Cardiac septum (tissue), 1 donor: ENCODE measurements at regions of chr2 and their contacts with region 1.

Region 1: GRCh38 chr2:128027801-128028667 is at the start of gene SAP130:
- DNase-seq: peak; percentile 99
- total RNA-seq, gene SAP130: 19.9 TPM

Region 2: DNA sequence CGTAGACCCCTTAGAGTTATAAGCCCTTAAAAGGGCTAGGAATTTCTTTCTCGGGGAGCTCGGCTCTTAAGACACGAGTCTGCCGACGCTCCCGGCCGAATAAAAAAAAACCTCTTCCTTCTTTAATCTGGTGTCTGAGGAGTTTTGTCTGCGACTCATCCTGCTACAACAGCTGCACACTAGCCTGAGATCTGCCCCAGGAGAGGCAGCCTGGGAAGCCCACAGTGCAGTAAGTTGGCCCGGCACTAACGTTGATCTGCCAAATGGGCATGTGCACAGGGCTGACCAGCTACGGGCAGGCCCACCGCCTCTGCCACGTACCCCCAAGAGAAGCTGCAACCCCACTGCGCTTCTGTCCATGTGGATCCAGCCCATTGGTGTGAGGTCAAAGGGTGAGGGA is 344.3 kb before region 1 on chr2:
- intact Hi-C with region 1: no loop called
- DNase-seq: no peak

Region 3: DNA sequence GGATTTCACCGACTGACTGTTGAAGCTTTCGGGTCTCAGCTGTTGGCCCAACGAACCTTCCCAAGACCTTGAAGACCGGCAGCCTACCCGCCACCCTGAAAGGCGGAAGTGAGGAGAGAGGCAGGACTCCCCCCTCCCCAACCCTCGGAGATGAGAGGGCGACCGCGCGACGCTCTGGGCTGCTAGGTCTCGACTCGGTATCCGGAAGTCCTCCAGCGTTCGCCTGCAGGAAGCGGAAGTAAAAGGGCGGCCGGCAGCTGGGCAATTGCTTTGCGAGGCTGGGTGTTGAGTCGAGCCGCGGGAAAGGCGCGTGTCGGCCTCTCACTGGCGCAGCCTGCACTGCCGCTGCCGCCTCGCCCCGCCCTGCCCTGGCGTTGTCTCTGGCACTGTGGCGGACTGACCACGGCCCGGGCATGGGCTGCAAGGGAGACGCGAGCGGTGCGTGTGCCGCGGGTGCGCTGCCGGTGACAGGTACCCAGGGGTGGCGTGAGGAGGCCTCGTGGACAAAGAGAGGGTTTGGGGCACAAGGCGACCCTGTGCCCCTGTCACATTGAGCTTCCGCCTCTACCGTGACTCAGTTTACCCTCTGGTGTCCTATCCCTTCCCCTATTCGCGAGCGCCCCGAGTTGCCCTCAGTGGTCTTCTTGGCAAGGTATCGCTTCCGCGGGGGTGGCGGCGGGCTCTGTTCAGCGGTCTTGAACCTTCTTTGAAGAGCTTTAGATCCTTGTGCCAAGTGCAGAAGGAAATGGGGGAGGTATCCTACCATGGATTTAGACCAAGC is 63.1 kb after region 1 on chr2 and contains the start of gene UGGT1:
- intact Hi-C with region 1: loop called (anchors 1 kb)
- DNase-seq: peak; percentile 98
- total RNA-seq, gene UGGT1: 28.0 TPM